ENCODE measurements at regions of chr6 and their contacts with region 1.

Region 1: GRCh38 chr6:28838634-28839442 is 84.9 kb downstream of the TRIM27 start:
- DNase-seq: peak; percentile 91
- H3K4me3 Mint-ChIP-seq: peak overlapping the region; percentile 86
- H3K27ac Mint-ChIP-seq: peak overlapping the region; percentile 85
- H3K4me1 Mint-ChIP-seq: peaks cover 14% of the 10 kb centered on the region
- H3K27me3 Mint-ChIP-seq: peaks cover 16% of the 10 kb centered on the region

Region 2: GRCh38 chr6:28683944-28684538 is 154.8 kb before region 1 on chr6:
- CTCF ChIA-PET with region 1: interaction called, 5 read pairs
- POLR2A ChIA-PET with region 1: no interaction called
- intact Hi-C with region 1: loop called (anchors 1 kb)
- DNase-seq: peak; percentile 14
- H3K4me3 Mint-ChIP-seq: peak overlapping the region; percentile 5
- H3K27ac Mint-ChIP-seq: no peak overlapping the region
- H3K4me1 Mint-ChIP-seq: peaks cover 11% of the 10 kb centered on the region
- H3K27me3 Mint-ChIP-seq: peaks cover 46% of the 10 kb centered on the region

Region 3: DNA sequence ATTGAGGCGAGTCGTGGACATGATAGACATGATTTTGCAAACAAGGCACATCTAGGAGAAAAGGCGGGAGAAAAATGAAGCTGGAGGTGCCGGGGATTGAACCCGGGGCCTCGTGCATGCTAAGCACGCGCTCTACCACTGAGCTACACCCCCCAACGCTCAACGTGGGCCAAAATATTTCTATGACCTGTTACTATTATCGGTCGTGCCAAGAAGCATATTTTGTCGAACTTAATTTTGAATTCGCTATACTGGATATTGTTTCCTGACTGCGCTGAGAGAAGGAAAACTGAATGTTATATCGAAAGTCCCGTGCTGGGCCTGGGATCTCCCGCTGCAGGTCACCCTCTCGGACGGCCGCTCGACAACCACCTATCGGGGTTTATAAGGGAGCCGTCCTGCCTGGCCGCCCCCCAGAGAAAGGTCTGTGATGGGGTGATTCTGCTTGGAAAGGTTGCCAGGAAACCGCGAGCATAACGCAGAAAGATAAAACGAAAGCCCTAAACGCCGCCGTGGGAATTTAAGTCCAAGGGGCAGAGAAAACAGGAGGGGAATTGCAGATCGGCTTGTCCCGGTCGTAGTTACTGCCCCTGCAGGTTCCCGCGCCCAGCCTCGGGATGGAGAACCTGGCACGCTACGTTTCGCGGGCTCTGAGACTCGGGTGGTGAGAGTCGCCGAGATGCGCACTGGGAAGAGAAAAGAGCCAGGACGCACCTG is 24.9 kb after region 1 on chr6:
- CTCF ChIA-PET with region 1: interaction called, 97 read pairs
- POLR2A ChIA-PET with region 1: interaction called, 5 read pairs
- intact Hi-C with region 1: loop called (anchors 1 kb)
- DNase-seq: peak; percentile 90
- H3K4me3 Mint-ChIP-seq: peak overlapping the region; percentile 82
- H3K27ac Mint-ChIP-seq: peak overlapping the region; percentile 91
- H3K4me1 Mint-ChIP-seq: peaks cover 38% of the 10 kb centered on the region
- H3K27me3 Mint-ChIP-seq: peaks cover 5% of the 10 kb centered on the region

Region 4: DNA sequence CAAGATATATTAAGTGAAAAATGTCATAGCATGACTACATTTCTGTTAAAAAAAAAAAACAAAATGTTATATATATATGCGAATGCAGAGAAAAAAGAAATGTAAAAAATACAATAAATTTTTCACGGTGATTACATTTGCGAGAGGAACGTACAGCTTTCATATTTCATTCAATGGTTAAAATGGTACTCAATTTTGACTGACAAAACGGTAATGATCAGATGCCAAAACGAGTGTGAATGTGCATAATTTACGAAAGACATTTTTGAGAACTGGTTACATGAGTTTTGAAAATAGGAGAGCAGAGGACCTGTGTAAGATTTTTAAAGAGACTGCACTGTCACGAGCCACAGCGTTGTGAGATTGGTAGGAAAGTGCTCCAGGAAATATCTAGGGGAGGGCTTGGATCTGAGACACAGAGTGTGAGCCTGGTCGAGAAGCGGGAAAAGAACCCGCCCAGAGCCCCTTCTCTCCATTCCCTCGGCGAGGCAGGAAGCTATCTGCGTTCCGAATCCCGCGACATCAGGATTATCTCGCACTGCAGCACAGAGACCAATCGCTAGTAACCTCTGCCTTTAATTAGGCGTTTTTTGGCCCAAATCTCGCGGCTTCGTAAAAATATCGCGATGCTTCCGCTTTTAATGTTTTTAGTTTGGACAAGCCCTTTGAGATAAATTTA is 56.4 kb after region 1 on chr6:
- CTCF ChIA-PET with region 1: interaction called, 30 read pairs
- POLR2A ChIA-PET with region 1: interaction called, 4 read pairs
- intact Hi-C with region 1: loop called (anchors 1 kb)
- DNase-seq: peak; percentile 95
- H3K4me3 Mint-ChIP-seq: peak overlapping the region; percentile 86
- H3K27ac Mint-ChIP-seq: peak overlapping the region; percentile 97
- H3K4me1 Mint-ChIP-seq: peaks cover 12% of the 10 kb centered on the region
- H3K27me3 Mint-ChIP-seq: peaks cover 2% of the 10 kb centered on the region

Region 5: DNA sequence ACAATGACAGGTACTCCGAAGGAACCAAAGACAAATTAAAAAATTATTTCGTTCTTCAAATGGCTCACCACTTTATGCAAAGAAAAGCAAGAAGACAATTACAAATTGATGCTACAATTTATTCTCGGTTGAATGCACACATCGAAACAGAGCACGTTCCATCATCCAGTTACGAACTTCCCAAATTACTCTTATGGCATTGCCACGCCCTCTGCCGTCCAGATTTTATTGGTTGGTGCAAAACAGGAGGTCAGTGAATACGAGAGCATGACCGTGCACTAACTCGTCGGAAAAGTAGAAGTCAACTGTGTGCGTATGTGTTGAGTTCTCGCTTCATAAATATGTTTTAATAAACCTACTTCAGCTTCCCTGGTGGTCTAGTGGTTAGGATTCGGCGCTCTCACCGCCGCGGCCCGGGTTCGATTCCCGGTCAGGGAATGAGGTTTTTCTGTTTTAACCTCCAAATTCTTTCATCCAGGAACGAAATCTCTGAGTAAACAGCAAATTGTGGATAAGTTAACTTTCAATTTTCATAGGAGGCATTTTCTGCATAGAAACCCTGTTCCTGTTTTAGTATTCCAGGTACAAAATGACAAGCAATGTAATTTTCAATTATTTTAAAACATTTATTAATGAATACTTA is 143.1 kb after region 1 on chr6:
- CTCF ChIA-PET with region 1: interaction called, 26 read pairs
- POLR2A ChIA-PET with region 1: no interaction called
- intact Hi-C with region 1: loop called (anchors 1 kb)
- DNase-seq: peak; percentile 80
- H3K4me3 Mint-ChIP-seq: peak overlapping the region; percentile 82
- H3K27ac Mint-ChIP-seq: peak overlapping the region; percentile 93
- H3K4me1 Mint-ChIP-seq: peaks cover 58% of the 10 kb centered on the region
- H3K27me3 Mint-ChIP-seq: peaks cover 27% of the 10 kb centered on the region

Region 6: DNA sequence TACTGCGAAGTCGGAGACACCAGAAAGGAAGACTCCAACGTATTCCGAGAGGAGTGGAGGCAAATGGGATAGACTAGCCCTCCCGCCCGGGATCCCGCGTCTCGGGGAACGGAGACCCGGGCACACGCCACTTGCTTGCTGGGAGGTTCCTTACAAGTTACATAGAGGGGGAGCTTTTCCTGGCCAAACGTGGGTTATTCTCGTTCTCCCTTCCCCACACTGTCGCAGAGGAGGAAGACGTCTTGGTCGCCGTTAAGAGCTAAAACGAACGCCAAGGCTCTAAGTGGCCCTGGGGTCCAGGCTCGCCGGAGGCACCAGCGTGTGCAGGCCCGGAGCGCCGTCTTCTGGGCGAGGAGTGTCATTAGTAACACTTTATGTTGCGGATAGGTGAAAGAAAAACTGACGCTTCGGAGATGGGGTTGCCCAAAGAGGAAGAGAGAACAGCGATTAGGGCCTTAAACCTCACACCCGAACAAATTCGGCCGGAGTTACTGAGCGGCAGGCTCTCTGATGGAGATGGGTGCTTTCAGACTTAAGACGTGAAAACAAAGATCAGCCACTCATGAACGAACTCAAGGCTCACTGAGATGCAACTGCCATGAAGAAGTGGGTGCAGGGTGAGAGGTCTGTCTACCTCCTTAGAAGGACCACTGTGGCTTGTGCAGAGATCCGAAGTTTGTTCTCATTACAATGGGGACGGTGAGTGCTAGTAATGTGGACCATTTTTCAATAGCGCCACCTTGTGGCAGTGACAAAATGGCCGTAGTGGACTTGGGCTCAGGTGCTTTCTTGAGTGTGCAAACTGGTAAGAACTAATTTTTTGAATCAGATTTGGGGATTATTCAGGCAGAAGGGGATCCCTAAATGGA is 178.0 kb after region 1 on chr6:
- CTCF ChIA-PET with region 1: interaction called, 106 read pairs
- POLR2A ChIA-PET with region 1: interaction called, 10 read pairs
- intact Hi-C with region 1: loop called (anchors 1 kb)
- DNase-seq: peak; percentile 88
- H3K4me3 Mint-ChIP-seq: peak overlapping the region; percentile 78
- H3K27ac Mint-ChIP-seq: peak overlapping the region; percentile 75
- H3K4me1 Mint-ChIP-seq: peaks cover 9% of the 10 kb centered on the region
- H3K27me3 Mint-ChIP-seq: peaks cover 6% of the 10 kb centered on the region

Measured in activated CD4-positive, alpha-beta memory T cell treated with anti-CD3 and anti-CD28 coated beads for 36 hours (primary cell).